IMR-90 (cell line): ENCODE measurements at regions of chr6 and their contacts with region 1.

Region 1: DNA sequence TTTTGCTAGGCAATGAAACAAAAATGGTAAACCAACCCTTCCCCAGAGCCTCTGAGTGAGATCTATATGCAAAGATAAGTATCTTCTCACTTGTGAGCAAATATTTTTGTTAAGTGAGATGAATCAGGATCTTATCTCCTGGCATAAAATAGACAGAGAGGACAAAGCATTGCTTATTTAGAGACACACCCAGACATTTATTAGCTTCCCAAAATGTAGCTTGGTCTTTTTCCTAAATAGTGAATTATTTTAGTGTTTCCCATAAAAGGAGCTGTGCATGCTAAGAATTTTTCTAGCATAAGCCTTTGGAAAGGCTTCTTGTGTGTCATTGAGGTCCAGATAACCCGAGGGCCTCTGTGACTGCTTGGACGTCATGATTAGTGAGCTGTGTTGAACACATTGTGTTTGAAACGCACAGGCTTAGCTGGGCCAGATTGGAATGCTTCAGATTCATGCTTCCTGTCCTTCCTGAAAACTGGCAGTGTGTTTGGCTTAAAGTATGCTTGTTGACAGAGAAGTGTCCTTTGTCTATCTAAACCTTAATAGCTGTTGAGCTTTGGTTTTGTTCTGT is 16.5 kb downstream of the MTHFD1L start:
- DNase-seq: peak; percentile 100
- ATAC-seq: peak; percentile 91
- H3K4me3 ChIP-seq: no peak overlapping the region
- H3K27ac ChIP-seq: peak overlapping the region; percentile 100; the same call in 1 of the 2 replicates
- H3K4me1 ChIP-seq: peaks cover 27% of the 10 kb centered on the region
- H3K27me3 ChIP-seq: no peaks in the 10 kb centered on the region
- CTCF ChIP-seq: no peak
- POLR2A ChIP-seq: peak; percentile 78
- RAD21 ChIP-seq: no peak

Region 2: DNA sequence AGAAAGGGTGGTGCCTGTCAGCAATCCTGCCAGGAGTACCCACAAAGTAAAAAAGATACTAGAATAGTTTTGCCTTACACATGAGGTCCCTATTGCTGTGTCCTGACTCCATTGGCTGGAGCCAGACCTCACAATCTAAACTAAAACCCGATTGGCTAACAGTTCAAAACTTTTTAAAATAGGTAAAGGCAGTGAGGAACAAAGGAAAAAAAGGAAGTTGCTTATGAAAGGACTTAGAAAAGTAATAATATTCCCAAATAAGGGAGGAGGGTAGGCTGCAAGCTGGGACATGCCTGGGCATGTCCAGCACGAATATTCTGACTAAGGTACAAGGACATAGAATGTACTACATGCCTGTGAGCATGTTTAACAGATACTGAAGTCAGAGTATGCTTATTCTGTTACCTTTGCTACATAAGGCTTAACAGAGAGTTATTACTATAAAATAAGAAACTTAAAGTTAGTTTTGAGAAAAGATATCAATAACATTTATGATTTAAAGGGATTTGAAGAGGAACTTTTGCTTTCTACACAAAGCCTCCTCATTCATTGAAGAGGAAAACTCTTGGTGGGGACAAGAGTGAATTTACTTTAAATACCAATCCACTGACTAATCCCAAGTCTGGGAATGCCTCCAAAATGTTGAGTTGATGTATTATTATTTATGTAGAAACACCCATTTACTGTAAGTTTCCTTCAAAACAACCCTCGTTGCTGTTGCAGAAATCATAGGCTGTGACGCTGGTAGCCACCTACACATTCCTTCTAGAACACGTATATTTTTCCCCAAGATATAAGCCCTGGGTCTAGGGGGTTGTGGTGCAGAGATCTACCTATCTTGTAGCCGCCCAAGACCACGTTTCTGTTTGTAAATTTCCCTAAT is 24.7 kb before region 1 on chr6:
- CTCF ChIA-PET with region 1: no interaction called
- POLR2A ChIA-PET with region 1: interaction called, 35 read pairs
- dilution Hi-C with region 1: no loop called
- in situ Hi-C with region 1: no loop called
- intact Hi-C with region 1: loop called (anchors 1 kb)
- DNase-seq: peak; percentile 100
- ATAC-seq: peak; percentile 87
- H3K4me3 ChIP-seq: no peak overlapping the region; the same call in 1 of the 2 replicates
- H3K27ac ChIP-seq: peak overlapping the region; percentile 100
- H3K4me1 ChIP-seq: peaks cover 26% of the 10 kb centered on the region
- H3K27me3 ChIP-seq: no peaks in the 10 kb centered on the region
- CTCF ChIP-seq: 0 out of 2 replicates have a peak, but pooled peaks have one; percentile 11
- POLR2A ChIP-seq: peak; percentile 94
- RAD21 ChIP-seq: no peak